ENCODE measurements at regions of chr20 and their contacts with region 1.

Region 1: GRCh38 chr20:62793912-62794724 is 2.2 kb upstream of the MRGBP start:
- DNase-seq: peak; percentile 83 to 97 (median 94)
- ATAC-seq: peak; percentile 62 to 75
- H3K4me3 Mint-ChIP-seq: peak overlapping the region; percentile 82 to 90 (median 86)
- H3K27ac Mint-ChIP-seq: peak overlapping the region; percentile 88 to 98 (median 96)
- H3K4me1 Mint-ChIP-seq: peaks cover 14 to 48% (median 44%) of the 10 kb centered on the region in 4 donors
- H3K27me3 Mint-ChIP-seq: no peaks in the 10 kb centered on the region

Region 2: DNA sequence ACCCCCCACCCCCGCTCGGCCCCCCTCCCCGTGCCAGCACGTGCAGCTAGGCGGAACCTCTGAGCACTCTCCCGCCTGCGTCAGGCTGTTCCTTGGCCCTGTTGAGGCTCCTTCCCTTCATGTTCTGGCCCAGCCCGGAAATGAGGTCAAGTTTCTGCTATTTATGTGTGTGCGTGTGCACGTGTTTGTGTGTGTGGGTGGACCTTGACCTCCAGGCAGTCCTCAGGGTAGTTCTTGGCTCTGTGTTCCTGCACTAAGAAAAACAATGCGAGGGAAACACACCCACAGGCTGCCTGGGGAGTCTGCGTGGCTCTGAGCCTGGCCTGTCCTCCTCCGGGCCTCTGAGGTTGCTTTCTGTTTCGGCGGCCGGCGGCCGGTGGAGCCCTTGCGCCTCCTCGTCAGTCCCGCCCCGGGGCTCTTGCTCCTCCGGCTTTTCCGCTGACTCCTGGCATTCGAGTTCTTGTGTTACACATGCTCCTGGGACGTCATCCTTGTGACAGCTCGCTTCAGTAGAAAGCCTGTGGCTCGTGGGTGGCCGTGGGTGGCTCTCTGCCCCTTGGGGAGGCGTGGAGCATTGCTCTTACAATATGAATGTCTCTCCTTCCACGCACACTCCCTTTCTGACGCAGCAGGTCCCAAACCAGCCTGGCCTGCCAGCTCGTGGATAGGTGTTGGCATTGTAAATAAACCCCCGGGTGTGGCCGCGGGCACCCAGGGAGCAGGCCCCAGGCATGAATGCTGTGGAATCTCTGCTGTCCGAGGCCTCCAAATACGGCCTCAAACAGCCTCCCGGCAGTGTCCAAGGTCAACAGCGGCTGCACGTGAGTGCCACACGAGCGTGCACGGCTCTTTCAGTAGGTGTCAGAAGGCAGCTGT is 141.8 kb before region 1 on chr20:
- POLR2A ChIA-PET with region 1: interaction called, 31 read pairs
- DNase-seq: peak in 9 of 10 donors; percentile 52 to 89 (median 75)
- ATAC-seq: peak; percentile 56 to 72
- H3K4me3 Mint-ChIP-seq: peak overlapping the region; percentile 75 to 91 (median 85)
- H3K27ac Mint-ChIP-seq: peak overlapping the region; percentile 90 to 99 (median 98)
- H3K4me1 Mint-ChIP-seq: peaks cover 8 to 35% (median 26%) of the 10 kb centered on the region in 4 donors
- H3K27me3 Mint-ChIP-seq: no peaks in the 10 kb centered on the region

Region 3: GRCh38 chr20:62776692-62777527 is 17.2 kb before region 1 on chr20:
- POLR2A ChIA-PET with region 1: interaction called, 18 read pairs
- DNase-seq: peak in 9 of 10 donors; percentile 14 to 90 (median 55)
- ATAC-seq: peak; percentile 90 to 92
- H3K4me3 Mint-ChIP-seq: peak overlapping the region; percentile 50 to 85 (median 70)
- H3K27ac Mint-ChIP-seq: peak overlapping the region; percentile 86 to 96 (median 92)
- H3K4me1 Mint-ChIP-seq: peaks cover 23 to 63% (median 50%) of the 10 kb centered on the region in 4 donors
- H3K27me3 Mint-ChIP-seq: no peaks in the 10 kb centered on the region

Region 4: GRCh38 chr20:62815066-62815991 is 21.2 kb after region 1 on chr20:
- POLR2A ChIA-PET with region 1: interaction called, 17 read pairs
- DNase-seq: no peak
- ATAC-seq: no peak
- H3K4me3 Mint-ChIP-seq: peak overlapping the region; percentile 28 to 66 (median 47)
- H3K27ac Mint-ChIP-seq: peak overlapping the region in 5 of 10 donors; percentile 51 to 85 (median 76)
- H3K4me1 Mint-ChIP-seq: peaks cover 10 to 17% (median 13%) of the 10 kb centered on the region in 4 donors
- H3K27me3 Mint-ChIP-seq: peaks cover 0 to 29% (median 6%) of the 10 kb centered on the region in 5 donors

Region 5: GRCh38 chr20:62900052-62900691 is 106.1 kb after region 1 on chr20:
- POLR2A ChIA-PET with region 1: no interaction called
- DNase-seq: peak; percentile 63 to 87 (median 77)
- ATAC-seq: peak; percentile 88 to 93
- H3K4me3 Mint-ChIP-seq: peak overlapping the region in 9 of 10 donors; percentile 54 to 85 (median 76)
- H3K27ac Mint-ChIP-seq: peak overlapping the region; percentile 33 to 96 (median 91)
- H3K4me1 Mint-ChIP-seq: peaks cover 18 to 40% (median 34%) of the 10 kb centered on the region in 4 donors
- H3K27me3 Mint-ChIP-seq: no peaks in the 10 kb centered on the region

Measured in naive thymus-derived CD8-positive, alpha-beta T cell (primary cell).